Thyroid gland (tissue), 4 donors: ENCODE measurements at regions of chr7 and their contacts with region 1.

Region 1: DNA sequence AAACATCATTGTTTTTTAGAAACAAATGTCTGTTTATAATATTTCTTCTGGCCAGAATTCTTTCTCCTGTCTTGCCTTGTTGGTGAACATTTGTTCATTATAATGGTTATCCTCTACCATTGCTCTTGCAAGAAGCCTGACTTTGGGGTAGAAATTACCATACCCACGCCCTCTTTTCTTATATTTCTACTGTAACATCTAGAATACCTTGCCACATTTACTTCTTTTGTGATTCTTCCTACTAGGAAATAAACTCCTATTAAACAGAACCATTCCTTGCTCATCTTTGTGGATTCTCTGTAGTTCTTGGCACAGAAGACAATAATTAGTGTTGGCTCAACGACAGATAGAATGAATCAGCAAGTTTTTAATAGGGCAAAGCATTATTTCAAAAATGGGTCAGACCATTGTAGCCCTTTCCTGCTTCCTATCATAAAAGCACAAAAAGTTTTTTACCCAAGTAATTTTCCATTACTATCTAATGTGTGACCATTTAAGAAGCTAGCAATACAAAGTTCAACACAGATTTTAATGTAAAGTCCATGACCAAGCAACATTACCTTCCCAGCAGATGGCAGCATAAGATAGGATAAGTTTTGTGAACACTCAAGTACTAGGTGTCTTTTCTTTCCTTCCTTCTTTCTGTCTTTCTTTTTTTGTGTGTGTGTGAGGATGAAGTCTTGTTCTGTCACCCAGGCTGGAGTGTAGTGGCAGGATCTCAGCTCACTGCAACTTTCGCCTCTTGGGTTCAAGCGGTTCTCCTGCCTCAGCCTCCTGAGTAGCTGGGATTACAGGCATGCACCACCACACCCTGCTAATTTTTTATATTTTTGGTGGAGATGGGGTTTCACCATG is 270.4 kb downstream of the HGF start:
- DNase-seq: peak in 1 of 2 donors; percentile 2
- H3K4me3 ChIP-seq: no peak overlapping the region
- H3K27ac ChIP-seq: peak overlapping the region; percentile 68 to 81 (median 75)
- H3K4me1 ChIP-seq: peaks cover 10 to 15% of the 10 kb centered on the region in 2 donors
- H3K27me3 ChIP-seq: no peaks in the 10 kb centered on the region
- CTCF ChIP-seq: peak; percentile 24 to 89 (median 58)
- POLR2A ChIP-seq: no peak

Region 2: GRCh38 chr7:80967071-80967916 is 532.2 kb before region 1 on chr7:
- intact Hi-C with region 1: no loop called
- DNase-seq: no peak
- H3K4me3 ChIP-seq: no peak overlapping the region
- H3K27ac ChIP-seq: no peak overlapping the region
- H3K4me1 ChIP-seq: no peaks in the 10 kb centered on the region
- H3K27me3 ChIP-seq: no peaks in the 10 kb centered on the region
- CTCF ChIP-seq: no peak
- POLR2A ChIP-seq: no peak

Region 3: GRCh38 chr7:81715984-81716588 is 216.6 kb after region 1 on chr7:
- intact Hi-C with region 1: loop called (anchors 10 kb)
- DNase-seq: peak; percentile 4 to 7
- H3K4me3 ChIP-seq: no peak overlapping the region
- H3K27ac ChIP-seq: no peak overlapping the region
- H3K4me1 ChIP-seq: no peaks in the 10 kb centered on the region
- H3K27me3 ChIP-seq: no peaks in the 10 kb centered on the region
- CTCF ChIP-seq: peak in 4 of 6 experiments; percentile 26 to 52 (median 42)
- POLR2A ChIP-seq: no peak

Region 4: DNA sequence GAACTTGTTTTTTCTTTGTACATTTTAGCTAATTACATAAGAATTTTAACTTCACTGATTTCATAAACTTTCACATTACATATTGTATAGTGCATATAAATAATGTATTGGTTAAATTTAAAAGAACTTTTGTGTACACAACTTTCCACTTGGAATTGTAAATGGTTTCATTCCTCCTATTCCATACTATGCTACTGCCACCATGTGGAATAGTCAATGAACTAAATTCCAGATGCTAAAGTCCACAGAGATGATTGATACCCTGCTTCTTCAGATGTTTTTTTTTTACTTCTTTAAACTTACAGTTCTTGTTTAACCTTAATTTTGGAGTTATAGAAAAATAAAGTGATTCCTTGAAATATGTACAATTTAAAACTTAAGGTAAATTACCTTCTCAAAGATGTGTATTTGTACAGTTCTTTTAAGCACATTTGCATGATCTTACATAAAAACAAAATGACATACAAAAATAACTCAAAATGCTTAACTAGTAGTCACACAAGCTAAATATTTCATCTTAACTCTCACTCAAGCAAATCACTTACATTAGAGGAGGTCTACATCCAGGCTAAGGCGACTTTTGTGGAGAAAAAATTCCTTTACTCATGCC is 518.0 kb after region 1 on chr7:
- intact Hi-C with region 1: loop called (anchors 10 kb)
- DNase-seq: no peak
- H3K4me3 ChIP-seq: no peak overlapping the region
- H3K27ac ChIP-seq: no peak overlapping the region
- H3K4me1 ChIP-seq: no peaks in the 10 kb centered on the region
- H3K27me3 ChIP-seq: no peaks in the 10 kb centered on the region
- CTCF ChIP-seq: peak in 3 of 6 experiments; percentile 37 to 44 (median 38)
- POLR2A ChIP-seq: no peak